Activated CD4-positive, alpha-beta memory T cell treated with anti-CD3 and anti-CD28 coated beads for 36 hours (primary cell): ENCODE measurements at regions of chr15 and their contacts with region 1.

Region 1: DNA sequence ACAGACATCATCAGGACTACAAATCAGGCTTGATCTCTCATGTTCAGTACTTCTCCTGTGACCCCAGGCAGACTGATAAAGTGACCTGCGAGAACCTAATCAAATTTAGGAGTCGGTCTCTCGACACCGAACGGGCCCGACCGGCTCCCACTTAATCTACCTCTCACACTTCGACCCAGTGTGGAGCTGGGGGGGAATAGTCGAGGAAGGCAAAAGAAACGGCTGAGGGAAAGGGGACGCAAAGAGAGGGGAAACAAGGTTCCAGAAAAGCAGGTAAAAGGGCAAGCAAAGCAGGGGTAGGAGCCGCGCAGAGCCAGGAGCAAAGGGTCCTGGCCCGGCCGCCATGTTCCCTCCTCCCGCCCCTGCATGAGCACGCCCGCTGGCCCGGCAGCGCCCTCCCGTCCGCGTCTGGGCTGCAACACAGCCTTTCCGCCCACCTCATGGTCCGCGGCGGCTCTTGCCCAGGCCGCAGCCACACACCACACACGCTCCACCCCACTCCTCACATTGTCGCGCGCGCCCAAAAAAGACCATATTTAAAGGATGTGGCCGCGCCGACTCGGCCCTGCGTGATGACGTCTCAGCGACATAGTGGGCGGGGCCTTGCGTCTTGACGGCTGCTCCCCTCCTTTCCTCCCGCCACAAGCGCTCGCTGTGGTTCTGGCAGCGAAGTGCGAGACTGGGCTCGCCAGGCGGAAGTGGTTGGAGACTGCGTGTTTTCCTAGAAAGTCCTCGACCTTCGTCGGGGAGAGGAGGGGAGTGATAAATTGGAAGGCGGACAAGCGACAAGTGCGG is at the start of gene ICE2:
- DNase-seq: peak; percentile 98
- H3K4me3 Mint-ChIP-seq: peak within 1 kb of the TSS; percentile 99
- H3K27ac Mint-ChIP-seq: peak within 1 kb of the TSS; percentile 98
- H3K4me1 Mint-ChIP-seq: peaks cover 55% of the 10 kb centered on the region
- H3K27me3 Mint-ChIP-seq: no peaks in the 10 kb centered on the region
- total RNA-seq, gene ICE2: 66.0 to 71.3 TPM

Region 2: DNA sequence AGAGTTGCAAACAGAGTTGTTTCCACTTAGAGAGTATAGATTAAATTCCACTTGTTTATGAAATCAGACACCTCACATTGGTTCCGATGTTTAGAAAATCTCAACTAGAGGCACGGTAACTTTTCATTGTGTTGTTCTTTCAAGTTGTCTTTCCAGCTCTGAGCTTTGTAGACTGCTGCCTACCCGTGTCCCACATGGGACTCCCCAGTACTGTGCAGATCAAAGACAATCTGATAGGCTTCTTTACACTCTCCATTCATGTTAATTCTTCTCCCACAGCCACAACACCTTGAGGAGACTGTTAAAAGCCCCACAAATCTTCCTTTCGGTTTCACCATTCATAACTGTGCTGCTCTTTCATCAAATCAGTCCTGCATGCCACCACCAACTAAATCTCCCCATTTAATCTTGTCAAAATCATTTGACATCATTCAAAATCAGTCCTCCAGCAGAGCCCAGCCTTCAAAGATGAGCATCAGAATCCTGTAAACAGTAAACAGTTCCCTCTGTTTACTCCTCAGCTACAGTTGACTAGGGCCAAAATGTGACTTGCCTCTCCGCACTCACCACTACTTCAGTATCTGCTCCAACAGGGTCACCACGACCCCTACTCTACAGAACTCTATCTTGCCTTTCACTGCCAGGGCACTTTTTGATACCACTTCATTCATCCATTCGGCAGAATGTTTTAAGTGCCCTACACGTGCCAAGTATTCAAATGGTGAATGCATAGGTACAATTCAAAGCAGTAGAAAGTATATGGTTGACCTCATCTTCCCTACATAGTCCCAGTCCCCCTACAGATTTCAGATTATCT is 89.3 kb before region 1 on chr15:
- CTCF ChIA-PET with region 1: no interaction called
- POLR2A ChIA-PET with region 1: no interaction called
- intact Hi-C with region 1: loop called (anchors 1 kb)
- DNase-seq: peak; percentile 63
- H3K4me3 Mint-ChIP-seq: peak overlapping the region; percentile 34
- H3K27ac Mint-ChIP-seq: peak overlapping the region; percentile 44
- H3K4me1 Mint-ChIP-seq: peaks cover 61% of the 10 kb centered on the region
- H3K27me3 Mint-ChIP-seq: no peaks in the 10 kb centered on the region

Region 3: GRCh38 chr15:60397772-60398445 is 80.9 kb before region 1 on chr15 and contains the start of gene ANXA2:
- CTCF ChIA-PET with region 1: no interaction called
- POLR2A ChIA-PET with region 1: interaction called, 5 read pairs
- intact Hi-C with region 1: loop called (anchors 1 kb)
- DNase-seq: peak; percentile 89
- H3K4me3 Mint-ChIP-seq: peak within 1 kb of the TSS; percentile 93
- H3K27ac Mint-ChIP-seq: peak within 1 kb of the TSS; percentile 91
- H3K4me1 Mint-ChIP-seq: peaks cover 45% of the 10 kb centered on the region
- H3K27me3 Mint-ChIP-seq: peaks cover 2% of the 10 kb centered on the region
- total RNA-seq, gene ANXA2: 131 to 132 TPM

Region 4: GRCh38 chr15:60454824-60455223 is 23.9 kb before region 1 on chr15:
- CTCF ChIA-PET with region 1: no interaction called
- POLR2A ChIA-PET with region 1: no interaction called
- intact Hi-C with region 1: no loop called
- DNase-seq: no peak
- H3K4me3 Mint-ChIP-seq: no peak overlapping the region
- H3K27ac Mint-ChIP-seq: no peak overlapping the region
- H3K4me1 Mint-ChIP-seq: no peaks in the 10 kb centered on the region
- H3K27me3 Mint-ChIP-seq: no peaks in the 10 kb centered on the region

Region 5: DNA sequence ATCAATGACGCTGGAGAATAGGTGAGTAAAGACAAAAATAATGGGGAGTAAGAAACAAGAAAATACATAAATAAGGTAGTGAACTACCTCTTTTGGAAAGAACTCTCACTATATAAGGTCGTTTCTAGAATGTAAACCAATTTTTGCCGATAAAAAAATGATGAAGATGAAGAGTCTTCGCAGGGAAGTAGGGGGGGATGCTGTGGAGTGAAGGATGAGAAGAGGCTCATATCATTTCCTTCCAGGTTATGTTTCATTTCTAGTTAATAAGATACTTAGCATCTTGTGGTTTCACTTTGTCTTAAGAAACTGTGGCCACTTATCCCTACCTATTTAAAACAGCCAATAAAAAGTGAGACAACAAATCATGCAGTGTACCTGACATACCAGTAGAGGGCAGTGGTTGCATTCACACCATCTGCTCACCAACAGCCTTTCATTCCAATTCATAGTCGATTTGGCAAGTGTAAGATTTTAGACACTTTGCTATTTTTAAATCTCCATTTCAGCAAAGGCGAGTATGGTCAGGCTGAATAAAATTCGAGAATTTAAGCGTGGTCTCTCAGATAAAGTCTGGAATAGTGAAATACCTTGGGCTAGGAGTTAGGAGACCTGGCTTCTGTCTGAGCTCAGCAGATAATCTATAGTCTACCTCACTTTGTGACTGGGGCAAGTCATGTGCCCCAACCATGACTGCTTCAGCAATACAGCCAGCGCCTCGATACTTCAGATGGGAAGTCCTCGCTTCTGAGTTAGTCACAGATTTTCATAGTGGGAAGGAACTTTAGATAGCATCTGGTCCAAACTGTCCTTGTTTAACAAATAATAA is 29.0 kb after region 1 on chr15:
- CTCF ChIA-PET with region 1: interaction called, 8 read pairs
- POLR2A ChIA-PET with region 1: interaction called, 3 read pairs
- intact Hi-C with region 1: loop called (anchors 1 kb)
- DNase-seq: peak; percentile 56
- H3K4me3 Mint-ChIP-seq: no peak overlapping the region
- H3K27ac Mint-ChIP-seq: peak overlapping the region; percentile 69
- H3K4me1 Mint-ChIP-seq: peaks cover 56% of the 10 kb centered on the region
- H3K27me3 Mint-ChIP-seq: no peaks in the 10 kb centered on the region

Region 6: DNA sequence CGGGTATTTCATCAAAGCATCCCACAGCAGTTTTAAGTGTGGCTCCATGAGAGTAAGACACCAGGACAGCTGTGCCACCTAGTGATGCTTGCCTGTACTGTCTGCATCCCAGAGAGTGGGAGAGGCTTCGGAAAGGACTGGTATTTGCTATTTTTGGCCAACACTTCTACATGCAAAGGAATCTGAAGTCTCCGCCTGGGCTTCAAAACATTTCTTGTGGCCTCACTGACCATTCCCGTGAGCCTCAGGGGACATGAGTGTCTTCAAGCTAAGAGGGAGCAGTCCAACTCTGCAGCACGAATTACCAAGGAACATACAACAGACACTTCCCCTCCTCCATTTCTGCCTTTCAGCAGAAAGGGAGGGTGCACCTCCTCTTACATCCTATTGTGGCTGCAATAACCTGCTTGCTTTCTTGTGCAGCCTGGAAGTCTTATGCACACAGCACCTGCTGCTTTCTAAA is 572.8 kb after region 1 on chr15:
- CTCF ChIA-PET with region 1: interaction called, 5 read pairs
- POLR2A ChIA-PET with region 1: no interaction called
- intact Hi-C with region 1: loop called (anchors 10 kb)
- DNase-seq: no peak
- H3K4me3 Mint-ChIP-seq: no peak overlapping the region
- H3K27ac Mint-ChIP-seq: no peak overlapping the region
- H3K4me1 Mint-ChIP-seq: no peaks in the 10 kb centered on the region
- H3K27me3 Mint-ChIP-seq: peaks cover 11% of the 10 kb centered on the region